ENCODE measurements at regions of chr14 and their contacts with region 1.

Region 1: GRCh38 chr14:70622111-70622712 is 19.5 kb upstream of the TTC9 start:
- DNase-seq: peak; percentile 16 to 79 (median 49)
- ATAC-seq: peak; percentile 86
- H3K4me3 ChIP-seq: no peak overlapping the region
- H3K4me3 Mint-ChIP-seq: no peak overlapping the region
- H3K27ac ChIP-seq: no peak overlapping the region
- H3K27ac Mint-ChIP-seq: no peak overlapping the region
- H3K4me1 ChIP-seq: no peaks in the 10 kb centered on the region
- H3K4me1 Mint-ChIP-seq: peaks cover 5% of the 10 kb centered on the region
- H3K27me3 ChIP-seq: no peaks in the 10 kb centered on the region
- H3K27me3 Mint-ChIP-seq: no peaks in the 10 kb centered on the region
- CTCF ChIP-seq: peak; percentile 89

Region 2: DNA sequence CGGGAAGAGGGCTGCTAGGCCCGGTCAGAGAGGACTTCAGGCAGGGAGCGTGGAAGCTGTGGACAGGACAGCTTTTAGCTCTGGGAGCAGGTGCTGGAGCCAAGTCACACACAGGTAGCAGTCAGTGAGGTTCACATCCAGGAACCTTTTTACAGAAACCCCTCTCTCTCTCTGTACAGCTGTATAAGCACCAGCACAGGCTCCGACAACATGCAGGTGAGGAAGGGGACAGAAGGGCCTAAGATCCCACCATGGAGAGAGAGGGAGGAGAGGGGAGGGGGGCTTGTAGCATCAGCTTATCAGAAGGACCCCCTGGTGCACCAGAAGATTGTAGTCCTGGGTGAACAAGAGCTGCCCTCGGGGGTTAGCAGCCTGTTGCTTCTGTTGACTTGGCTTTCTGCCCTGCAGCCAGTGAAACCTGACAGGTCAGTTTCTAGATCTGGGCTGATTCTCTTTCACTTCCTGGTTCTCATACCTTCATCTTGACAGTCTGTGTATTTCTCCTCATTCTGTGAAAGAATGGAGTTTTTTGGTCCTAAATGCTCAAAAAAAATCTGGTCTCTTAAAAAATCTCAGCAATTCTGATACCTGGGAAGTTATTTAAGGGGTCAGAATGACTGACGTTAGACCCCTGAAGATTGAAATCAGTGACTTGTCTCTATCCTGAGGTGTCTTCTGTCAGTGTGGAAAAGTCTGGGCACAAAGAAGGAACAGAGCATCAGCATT is 43.1 kb after region 1 on chr14:
- CTCF ChIA-PET with region 1: no interaction called
- POLR2A ChIA-PET with region 1: interaction called, 5 read pairs
- intact Hi-C with region 1: loop called (anchors 5 kb)
- DNase-seq: no peak
- ATAC-seq: no peak
- H3K4me3 ChIP-seq: no peak overlapping the region
- H3K4me3 Mint-ChIP-seq: peak overlapping the region; percentile 60
- H3K27ac ChIP-seq: peak overlapping the region in 1 of 2 donors; percentile 6
- H3K27ac Mint-ChIP-seq: peak overlapping the region; percentile 88
- H3K4me1 ChIP-seq: peaks cover 56% of the 10 kb centered on the region
- H3K4me1 Mint-ChIP-seq: peaks cover 66% of the 10 kb centered on the region
- H3K27me3 ChIP-seq: no peaks in the 10 kb centered on the region
- H3K27me3 Mint-ChIP-seq: no peaks in the 10 kb centered on the region
- CTCF ChIP-seq: no peak

Region 3: DNA sequence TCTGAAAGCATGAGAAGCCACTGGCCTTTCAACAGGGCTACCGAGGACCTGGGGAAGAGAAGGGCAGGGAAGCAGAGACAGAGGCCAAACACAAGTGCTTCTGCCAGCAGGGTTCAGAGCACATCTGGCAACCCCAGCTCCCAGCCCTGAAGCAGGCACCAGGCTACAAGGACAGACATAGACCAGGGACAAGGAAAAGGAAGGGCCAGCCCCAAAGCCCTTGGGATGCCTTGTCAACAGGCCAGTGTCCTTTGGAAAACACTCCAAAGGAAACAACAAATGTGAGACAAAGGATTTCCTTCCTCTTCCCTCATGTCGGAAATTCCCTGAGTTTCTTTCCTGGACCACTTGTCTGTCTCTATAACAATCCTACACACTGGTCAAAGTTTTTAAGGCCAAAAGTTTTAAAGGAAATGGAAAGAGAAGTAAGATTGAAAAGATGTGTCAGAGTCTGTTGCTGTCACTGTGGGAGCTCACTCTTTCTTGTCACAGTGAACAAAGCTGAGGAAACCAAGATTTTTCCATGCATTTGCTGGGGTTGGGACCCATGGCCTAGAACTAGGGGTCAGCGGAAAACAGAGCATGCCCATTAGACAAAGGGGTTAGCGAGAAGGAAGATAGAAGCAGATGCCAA is 78.9 kb after region 1 on chr14:
- CTCF ChIA-PET with region 1: no interaction called
- POLR2A ChIA-PET with region 1: no interaction called
- intact Hi-C with region 1: loop called in 1 of 2 experiments (anchors 1 kb)
- DNase-seq: no peak
- ATAC-seq: no peak
- H3K4me3 ChIP-seq: no peak overlapping the region
- H3K4me3 Mint-ChIP-seq: no peak overlapping the region
- H3K27ac ChIP-seq: no peak overlapping the region
- H3K27ac Mint-ChIP-seq: no peak overlapping the region
- H3K4me1 ChIP-seq: no peaks in the 10 kb centered on the region
- H3K4me1 Mint-ChIP-seq: no peaks in the 10 kb centered on the region
- H3K27me3 ChIP-seq: no peaks in the 10 kb centered on the region
- H3K27me3 Mint-ChIP-seq: no peaks in the 10 kb centered on the region
- CTCF ChIP-seq: no peak

Region 4: GRCh38 chr14:70714055-70714621 is 91.9 kb after region 1 on chr14:
- CTCF ChIA-PET with region 1: interaction called, 3 read pairs
- POLR2A ChIA-PET with region 1: no interaction called
- intact Hi-C with region 1: loop called (anchors 1 kb)
- DNase-seq: peak in 12 of 14 experiments; percentile 12 to 84 (median 36)
- ATAC-seq: no peak
- H3K4me3 ChIP-seq: no peak overlapping the region
- H3K4me3 Mint-ChIP-seq: no peak overlapping the region
- H3K27ac ChIP-seq: no peak overlapping the region
- H3K27ac Mint-ChIP-seq: no peak overlapping the region
- H3K4me1 ChIP-seq: peaks cover 5% of the 10 kb centered on the region
- H3K4me1 Mint-ChIP-seq: peaks cover 5% of the 10 kb centered on the region
- H3K27me3 ChIP-seq: no peaks in the 10 kb centered on the region
- H3K27me3 Mint-ChIP-seq: no peaks in the 10 kb centered on the region
- CTCF ChIP-seq: peak; percentile 95

Region 5: GRCh38 chr14:70816525-70816924 is 194.3 kb after region 1 on chr14:
- CTCF ChIA-PET with region 1: interaction called, 4 read pairs
- POLR2A ChIA-PET with region 1: no interaction called
- intact Hi-C with region 1: loop called (anchors 1 to 2 kb)
- DNase-seq: no peak
- ATAC-seq: no peak
- H3K4me3 ChIP-seq: no peak overlapping the region
- H3K4me3 Mint-ChIP-seq: no peak overlapping the region
- H3K27ac ChIP-seq: no peak overlapping the region
- H3K27ac Mint-ChIP-seq: no peak overlapping the region
- H3K4me1 ChIP-seq: peaks cover 5% of the 10 kb centered on the region
- H3K4me1 Mint-ChIP-seq: peaks cover 15% of the 10 kb centered on the region
- H3K27me3 ChIP-seq: peaks cover 5 to 7% of the 10 kb centered on the region in 2 experiments
- H3K27me3 Mint-ChIP-seq: peaks cover 28% of the 10 kb centered on the region
- CTCF ChIP-seq: no peak

Region 6: DNA sequence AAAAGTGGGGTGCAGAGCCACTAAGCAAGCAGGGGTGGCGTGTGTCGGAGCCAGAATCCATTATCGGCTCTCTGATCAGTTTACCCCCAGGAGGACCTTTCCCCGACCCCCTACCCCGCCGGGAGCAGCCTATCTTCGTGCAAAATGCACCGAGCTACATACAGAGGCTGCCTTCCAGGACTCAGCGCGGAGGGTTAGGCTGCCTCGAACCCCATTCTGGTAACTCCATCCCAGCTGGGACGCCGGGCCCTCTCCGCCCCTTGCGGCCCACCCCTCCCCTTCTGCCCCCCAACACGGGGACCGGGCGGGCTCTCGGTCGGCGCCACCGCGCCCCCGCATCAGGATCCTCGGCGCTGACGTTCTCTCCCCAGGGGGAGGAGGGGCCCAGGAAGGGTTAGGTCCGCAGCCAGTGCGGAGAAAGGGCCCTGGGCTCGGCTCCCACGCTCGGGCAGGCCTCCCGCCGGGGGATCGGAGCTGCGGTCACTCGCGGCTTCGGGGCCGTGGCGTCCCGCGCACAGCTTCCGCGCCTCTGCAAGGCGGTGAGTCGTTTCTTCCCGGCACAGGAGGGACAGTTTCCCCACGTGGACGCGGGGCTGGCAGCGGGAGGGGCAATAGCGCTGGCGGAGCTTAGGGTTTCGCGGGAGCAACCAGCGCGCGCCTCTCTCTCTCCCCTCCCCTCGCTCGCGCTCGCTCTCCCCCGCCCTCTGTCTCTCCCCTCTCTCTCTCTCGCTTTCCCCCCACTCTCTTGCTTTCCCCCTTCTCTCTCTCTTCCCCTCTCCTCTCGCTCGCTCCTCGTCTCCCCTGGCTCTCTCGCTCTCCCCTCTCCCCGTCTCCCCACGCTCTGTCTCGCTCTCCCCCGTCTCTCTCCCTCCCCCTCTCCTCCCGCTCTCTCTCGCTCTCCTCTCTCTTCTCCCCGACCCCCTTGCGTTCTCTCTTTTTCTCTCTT is 199.6 kb after region 1 on chr14:
- CTCF ChIA-PET with region 1: interaction called, 4 read pairs
- POLR2A ChIA-PET with region 1: no interaction called
- intact Hi-C with region 1: loop called (anchors 1 to 2 kb)
- DNase-seq: peak in 13 of 14 experiments; percentile 23 to 81 (median 44)
- ATAC-seq: peak; percentile 46
- H3K4me3 ChIP-seq: peak overlapping the region; percentile 66
- H3K4me3 Mint-ChIP-seq: peak overlapping the region; percentile 83
- H3K27ac ChIP-seq: no peak overlapping the region
- H3K27ac Mint-ChIP-seq: no peak overlapping the region
- H3K4me1 ChIP-seq: peaks cover 18% of the 10 kb centered on the region
- H3K4me1 Mint-ChIP-seq: peaks cover 28% of the 10 kb centered on the region
- H3K27me3 ChIP-seq: peaks cover 5 to 15% of the 10 kb centered on the region in 2 experiments
- H3K27me3 Mint-ChIP-seq: peaks cover 43% of the 10 kb centered on the region
- CTCF ChIP-seq: no peak

Region 7: GRCh38 chr14:71371711-71372396 is 749.6 kb after region 1 on chr14:
- CTCF ChIA-PET with region 1: no interaction called
- POLR2A ChIA-PET with region 1: no interaction called
- intact Hi-C with region 1: no loop called
- DNase-seq: peak in 2 of 14 experiments; percentile 26 to 42
- ATAC-seq: peak; percentile 26
- H3K4me3 ChIP-seq: no peak overlapping the region
- H3K4me3 Mint-ChIP-seq: no peak overlapping the region
- H3K27ac ChIP-seq: no peak overlapping the region
- H3K27ac Mint-ChIP-seq: no peak overlapping the region
- H3K4me1 ChIP-seq: no peaks in the 10 kb centered on the region
- H3K4me1 Mint-ChIP-seq: peaks cover 14% of the 10 kb centered on the region
- H3K27me3 ChIP-seq: no peaks in the 10 kb centered on the region
- H3K27me3 Mint-ChIP-seq: no peaks in the 10 kb centered on the region
- CTCF ChIP-seq: no peak

Measured in CD4-positive, alpha-beta T cell (primary cell).